CD14-positive monocyte (primary cell): ENCODE measurements at regions of chr6 and their contacts with region 1.

Region 1: GRCh38 chr6:90296346-90297114 is at the start of gene BACH2:
- DNase-seq: peak; percentile 63 to 80 (median 67)
- H3K4me3 ChIP-seq: peak within 1 kb of the TSS; percentile 39 to 77 (median 51)
- H3K4me3 Mint-ChIP-seq: peak within 1 kb of the TSS; percentile 84 to 91
- H3K27ac ChIP-seq: no peak within 1 kb of the TSS
- H3K27ac Mint-ChIP-seq: peak within 1 kb of the TSS in 1 of 7 donors; percentile 82
- H3K4me1 ChIP-seq: peaks cover 18 to 22% of the 10 kb centered on the region in 2 donors
- H3K4me1 Mint-ChIP-seq: peaks cover 14% of the 10 kb centered on the region
- H3K27me3 ChIP-seq: peaks cover 40 to 60% of the 10 kb centered on the region in 2 donors
- H3K27me3 Mint-ChIP-seq: peaks cover 52 to 66% (median 61%) of the 10 kb centered on the region in 3 donors
- CTCF ChIP-seq: no peak
- polyA plus RNA-seq, gene BACH2: 0.04 to 0.09 (median 0.05) TPM

Region 2: GRCh38 chr6:90098001-90098531 is 198.5 kb before region 1 on chr6:
- intact Hi-C with region 1: loop called in 1 of 2 experiments (anchors 10 kb)
- DNase-seq: peak; percentile 49 to 67 (median 67)
- H3K4me3 ChIP-seq: peak overlapping the region in 1 of 3 experiments; percentile 7
- H3K4me3 Mint-ChIP-seq: peak overlapping the region in 1 of 2 donors; percentile 40
- H3K27ac ChIP-seq: no peak overlapping the region
- H3K27ac Mint-ChIP-seq: peak overlapping the region; percentile 6 to 86 (median 68)
- H3K4me1 ChIP-seq: peaks cover 38 to 45% of the 10 kb centered on the region in 2 donors
- H3K4me1 Mint-ChIP-seq: peaks cover 55% of the 10 kb centered on the region
- H3K27me3 ChIP-seq: no peaks in the 10 kb centered on the region
- H3K27me3 Mint-ChIP-seq: peaks cover 0 to 3% (median 0%) of the 10 kb centered on the region in 3 donors
- CTCF ChIP-seq: no peak

Region 3: DNA sequence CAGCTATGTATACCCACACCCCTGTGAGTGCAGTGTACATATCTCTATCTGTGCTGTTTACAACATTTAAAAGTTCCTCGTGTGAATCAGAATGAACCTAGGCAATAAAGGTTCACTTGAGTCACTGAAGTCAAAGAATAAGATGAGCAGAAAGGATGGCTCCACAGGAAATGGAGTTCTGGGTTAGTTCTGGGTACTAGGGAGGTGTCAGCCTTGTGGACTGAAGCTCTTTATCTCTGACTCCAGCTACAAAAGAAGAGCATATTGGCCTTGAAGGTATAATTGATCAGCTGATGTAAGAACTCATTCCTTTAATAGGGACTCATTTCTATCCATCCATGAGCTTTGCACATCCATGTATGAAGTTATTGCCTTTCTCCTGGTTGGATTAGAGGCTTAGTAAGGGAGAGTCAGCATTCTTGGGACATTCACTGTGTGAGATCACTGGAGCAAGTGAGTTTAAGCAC is 74.0 kb after region 1 on chr6:
- intact Hi-C with region 1: loop called in 1 of 2 experiments (anchors 5 kb)
- DNase-seq: no peak
- H3K4me3 ChIP-seq: no peak overlapping the region
- H3K4me3 Mint-ChIP-seq: no peak overlapping the region
- H3K27ac ChIP-seq: no peak overlapping the region
- H3K27ac Mint-ChIP-seq: no peak overlapping the region
- H3K4me1 ChIP-seq: no peaks in the 10 kb centered on the region
- H3K4me1 Mint-ChIP-seq: peaks cover 2% of the 10 kb centered on the region
- H3K27me3 ChIP-seq: no peaks in the 10 kb centered on the region
- H3K27me3 Mint-ChIP-seq: peaks cover 0 to 2% (median 0%) of the 10 kb centered on the region in 3 donors
- CTCF ChIP-seq: no peak

Region 4: GRCh38 chr6:90393232-90393884 is 96.8 kb after region 1 on chr6:
- intact Hi-C with region 1: loop called (anchors 5 to 10 kb)
- DNase-seq: peak; percentile 40 to 73 (median 52)
- H3K4me3 ChIP-seq: no peak overlapping the region
- H3K4me3 Mint-ChIP-seq: no peak overlapping the region
- H3K27ac ChIP-seq: no peak overlapping the region
- H3K27ac Mint-ChIP-seq: no peak overlapping the region
- H3K4me1 ChIP-seq: no peaks in the 10 kb centered on the region
- H3K4me1 Mint-ChIP-seq: peaks cover 2% of the 10 kb centered on the region
- H3K27me3 ChIP-seq: no peaks in the 10 kb centered on the region
- H3K27me3 Mint-ChIP-seq: peaks cover 0 to 5% (median 3%) of the 10 kb centered on the region in 3 donors
- CTCF ChIP-seq: peak; percentile 75

Region 5: DNA sequence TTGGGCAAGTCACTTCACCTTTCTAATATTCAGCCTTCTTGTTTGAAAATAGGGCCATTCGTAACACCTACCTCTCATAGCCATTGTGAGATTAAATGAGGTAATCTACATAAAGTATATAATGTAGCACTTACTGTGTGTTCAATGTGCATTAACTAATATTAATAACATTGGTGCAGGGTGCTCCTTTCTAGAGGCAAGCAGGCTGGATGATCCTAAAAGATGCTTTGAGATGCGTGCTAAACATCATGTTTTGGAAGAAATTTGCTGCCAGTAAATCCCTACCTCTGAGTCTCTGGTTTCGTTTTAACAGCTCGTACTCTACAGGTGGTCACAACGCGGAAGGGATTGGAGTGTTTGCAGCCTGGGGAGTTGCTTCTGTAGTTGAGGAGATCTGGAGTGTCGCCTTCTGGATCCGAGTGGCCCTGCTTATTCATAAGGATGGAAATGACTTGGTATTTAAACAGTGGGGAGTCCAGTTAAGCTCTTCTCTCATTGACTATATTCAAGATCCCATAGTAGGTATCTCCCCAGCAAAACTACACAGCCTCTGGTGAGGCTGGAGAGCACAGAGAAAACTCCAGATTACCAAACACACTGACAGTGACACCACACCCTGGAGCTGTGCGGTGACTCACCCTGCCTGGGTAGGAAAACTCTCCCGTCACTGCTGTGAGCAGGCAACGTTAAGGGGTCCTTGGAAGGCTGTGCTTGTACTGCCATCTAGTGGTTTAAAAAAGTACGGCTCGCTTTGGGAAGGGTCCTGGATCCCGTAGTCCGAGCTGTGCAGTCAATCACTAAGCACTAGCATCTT is 182.5 kb after region 1 on chr6:
- intact Hi-C with region 1: loop called in 1 of 2 experiments (anchors 5 kb)
- DNase-seq: peak; percentile 88 to 97 (median 91)
- H3K4me3 ChIP-seq: no peak overlapping the region
- H3K4me3 Mint-ChIP-seq: no peak overlapping the region
- H3K27ac ChIP-seq: peak overlapping the region in 1 of 2 donors; percentile 28
- H3K27ac Mint-ChIP-seq: peak overlapping the region; percentile 11 to 92 (median 83)
- H3K4me1 ChIP-seq: peaks cover 5 to 9% of the 10 kb centered on the region in 2 donors
- H3K4me1 Mint-ChIP-seq: peaks cover 8% of the 10 kb centered on the region
- H3K27me3 ChIP-seq: no peaks in the 10 kb centered on the region
- H3K27me3 Mint-ChIP-seq: peaks cover 0 to 2% (median 2%) of the 10 kb centered on the region in 3 donors
- CTCF ChIP-seq: peak; percentile 89

Region 6: GRCh38 chr6:90790696-90791095 is 494.2 kb after region 1 on chr6:
- intact Hi-C with region 1: no loop called
- DNase-seq: no peak
- H3K4me3 ChIP-seq: no peak overlapping the region
- H3K4me3 Mint-ChIP-seq: no peak overlapping the region
- H3K27ac ChIP-seq: no peak overlapping the region
- H3K27ac Mint-ChIP-seq: no peak overlapping the region
- H3K4me1 ChIP-seq: no peaks in the 10 kb centered on the region
- H3K4me1 Mint-ChIP-seq: no peaks in the 10 kb centered on the region
- H3K27me3 ChIP-seq: no peaks in the 10 kb centered on the region
- H3K27me3 Mint-ChIP-seq: peaks cover 0 to 2% (median 0%) of the 10 kb centered on the region in 3 donors
- CTCF ChIP-seq: no peak